Mucosa of descending colon (tissue), 3 donors: ENCODE measurements at regions of chr19 and their contacts with region 1.

Region 1: DNA sequence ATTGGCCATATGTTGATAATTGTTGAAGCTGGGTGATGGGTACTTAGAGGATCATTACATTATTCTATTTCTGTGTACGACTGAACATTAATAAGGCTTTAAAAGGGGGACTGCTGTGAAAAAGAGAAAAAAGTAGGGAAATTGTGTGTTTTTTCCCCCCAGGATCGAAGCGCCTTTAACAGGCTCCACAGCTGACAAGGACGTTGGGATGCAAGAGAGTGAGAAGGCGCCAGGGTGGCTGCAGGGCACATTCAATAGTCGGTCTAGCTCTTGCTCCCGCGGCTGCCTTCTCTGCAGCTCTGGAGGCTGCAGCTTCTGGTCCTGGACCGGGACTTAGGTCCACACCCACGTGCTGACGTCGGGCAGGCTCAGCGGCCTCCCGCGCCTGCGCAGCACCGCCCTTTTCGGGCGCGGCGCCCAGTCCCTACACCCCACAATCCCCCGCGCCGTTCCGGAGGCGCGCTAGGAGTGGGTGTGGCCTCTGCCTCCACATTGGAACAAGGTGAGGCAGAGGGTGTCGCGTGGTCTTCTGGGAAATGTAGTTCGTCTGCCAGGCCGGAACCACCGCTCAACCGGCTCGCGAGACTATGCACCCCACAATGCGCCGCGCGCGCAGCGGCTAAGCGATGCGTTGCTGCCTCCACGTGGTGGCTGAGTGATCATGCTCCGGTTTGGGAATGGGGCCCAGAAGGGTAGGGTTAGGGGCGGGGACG is 4.9 kb upstream of the LRFN3 start:
- DNase-seq: peak; percentile 99 to 100 (median 99)
- ATAC-seq: peak; percentile 98
- H3K4me3 ChIP-seq: no peak overlapping the region
- H3K4me1 ChIP-seq: peaks cover 17% of the 10 kb centered on the region
- CTCF ChIP-seq: peak; percentile 71

Region 2: GRCh38 chr19:35693830-35694599 is 237.3 kb before region 1 on chr19:
- intact Hi-C with region 1: loop called in 1 of 2 experiments (anchors 10 kb)
- DNase-seq: peak; percentile 86 to 95 (median 89)
- ATAC-seq: peak; percentile 100
- H3K4me3 ChIP-seq: no peak overlapping the region
- H3K4me1 ChIP-seq: no peaks in the 10 kb centered on the region
- CTCF ChIP-seq: peak; percentile 88

Region 3: DNA sequence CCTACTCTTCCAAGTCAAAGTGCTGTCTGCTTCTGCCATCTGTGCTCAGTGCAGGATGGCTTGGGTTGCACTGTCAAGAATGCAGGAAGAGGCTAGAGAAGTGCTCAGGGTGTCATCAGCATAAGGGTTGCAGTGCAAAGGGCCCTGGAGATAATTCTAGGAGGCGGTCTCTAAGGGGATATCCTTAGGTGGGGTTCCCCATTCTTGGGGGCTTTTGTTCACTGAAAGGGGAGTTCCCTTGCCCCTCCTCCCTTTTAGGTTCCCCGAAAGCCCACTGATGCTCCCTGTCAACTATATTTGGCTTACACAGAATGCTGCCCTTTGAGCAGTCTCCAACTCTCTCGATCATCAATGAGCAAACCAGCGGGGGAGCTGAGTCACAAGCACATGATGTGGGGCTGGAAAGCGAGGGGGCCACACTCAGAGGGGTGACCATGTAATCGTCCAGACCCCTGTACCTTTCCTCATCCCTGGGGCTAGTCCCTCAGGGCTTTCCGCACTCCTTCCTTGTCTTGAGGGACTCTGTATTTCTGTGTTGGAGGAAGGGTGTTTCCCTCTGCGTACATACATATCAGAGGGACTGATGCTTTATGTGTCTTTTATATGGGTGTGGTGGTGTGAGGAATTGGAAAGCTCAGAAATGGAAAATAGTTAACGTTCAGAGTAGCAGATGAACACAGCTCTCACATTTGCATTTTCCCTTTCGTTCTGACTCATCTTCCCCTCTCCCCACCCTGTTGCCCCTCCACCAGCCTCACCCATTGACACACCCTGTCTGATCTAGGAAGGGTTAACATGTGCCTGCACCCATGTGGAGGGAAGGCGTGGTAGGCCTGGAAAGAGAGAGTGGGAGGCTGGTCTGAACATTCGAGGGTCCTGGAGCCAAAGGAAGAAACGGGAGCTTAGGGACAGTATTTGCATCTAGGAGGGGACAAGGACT is 220.3 kb before region 1 on chr19:
- intact Hi-C with region 1: no loop called
- DNase-seq: no peak
- ATAC-seq: peak; percentile 16
- H3K4me3 ChIP-seq: no peak overlapping the region
- H3K4me1 ChIP-seq: peaks cover 9% of the 10 kb centered on the region
- CTCF ChIP-seq: no peak

Region 4: GRCh38 chr19:35879770-35880317 is 51.5 kb before region 1 on chr19:
- intact Hi-C with region 1: loop called (anchors 5 to 10 kb)
- DNase-seq: peak; percentile 89 to 96 (median 92)
- ATAC-seq: peak; percentile 98
- H3K4me3 ChIP-seq: no peak overlapping the region
- H3K4me1 ChIP-seq: no peaks in the 10 kb centered on the region
- CTCF ChIP-seq: no peak

Region 5: DNA sequence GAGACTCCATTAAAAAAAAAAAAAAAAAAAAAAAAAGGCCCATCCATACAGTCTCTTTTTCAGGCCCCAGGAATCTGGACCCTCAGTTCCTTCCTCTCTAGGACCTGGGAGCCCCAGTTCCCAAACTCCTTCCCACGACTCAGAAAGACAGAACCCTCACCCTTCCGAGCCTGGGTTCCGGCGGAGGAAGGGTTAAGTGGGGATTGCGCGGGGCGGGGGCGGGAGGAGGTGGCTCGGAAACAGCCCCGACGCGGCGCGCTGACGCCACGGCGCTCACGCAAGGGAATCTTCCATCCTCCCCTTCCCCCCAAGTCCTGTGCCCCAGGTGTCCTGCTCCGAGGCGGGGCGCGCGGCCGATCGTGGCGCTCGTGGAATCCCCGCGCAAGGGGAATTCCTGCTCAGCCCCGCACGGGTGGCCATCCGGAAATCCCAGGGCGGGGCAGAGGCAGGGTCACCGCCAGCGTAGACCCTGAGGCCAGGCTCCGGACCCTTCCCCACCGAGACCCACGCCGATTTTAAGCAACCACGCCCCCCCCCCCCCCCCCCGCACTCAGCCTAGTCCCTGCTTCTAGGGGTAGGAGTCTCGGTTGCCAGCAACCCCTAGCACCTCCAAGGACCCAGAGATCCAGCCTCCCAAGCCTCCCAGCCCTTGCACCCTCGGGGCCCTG is 31.6 kb before region 1 on chr19:
- intact Hi-C with region 1: loop called in 1 of 2 experiments (anchors 5 kb)
- DNase-seq: peak; percentile 88 to 93 (median 91)
- ATAC-seq: peak; percentile 89
- H3K4me3 ChIP-seq: peak overlapping the region; percentile 44
- H3K4me1 ChIP-seq: peaks cover 9% of the 10 kb centered on the region
- CTCF ChIP-seq: no peak

Region 6: DNA sequence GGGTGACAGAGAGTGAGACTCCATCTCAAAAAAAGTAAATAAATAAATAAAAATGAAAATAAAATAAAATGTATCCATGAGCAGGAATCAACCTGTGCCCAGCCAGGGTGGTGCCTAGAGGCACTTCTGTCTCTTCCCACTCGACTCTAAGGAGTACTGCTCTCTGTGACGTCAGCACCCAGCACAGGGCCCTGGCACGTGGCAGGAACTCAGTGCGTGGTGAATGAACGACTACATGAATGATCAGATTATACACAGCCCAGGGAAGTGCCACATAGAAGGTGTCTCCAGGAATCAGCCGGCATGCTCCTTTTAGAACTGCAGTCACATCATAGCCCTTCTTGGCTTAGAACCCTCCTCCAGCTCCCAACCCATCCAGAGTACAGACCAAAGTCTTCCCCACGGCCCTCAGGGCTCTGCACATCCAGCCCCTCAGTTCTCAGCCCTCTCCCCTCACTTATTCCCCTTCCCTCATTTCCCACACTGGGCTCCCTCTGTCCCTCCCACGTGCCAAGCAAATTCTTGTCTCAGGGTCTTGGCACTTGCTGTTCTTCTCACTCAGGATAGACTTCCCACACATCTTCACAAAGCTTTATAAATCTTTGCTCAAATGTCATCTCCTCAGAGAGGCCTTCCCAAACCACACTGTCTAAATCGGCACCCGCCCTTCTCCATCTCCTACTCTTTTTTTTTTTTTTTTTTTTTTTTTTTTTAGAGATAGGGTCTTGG is 97.2 kb after region 1 on chr19:
- intact Hi-C with region 1: no loop called
- DNase-seq: no peak
- ATAC-seq: no peak
- H3K4me3 ChIP-seq: no peak overlapping the region
- H3K4me1 ChIP-seq: no peaks in the 10 kb centered on the region
- CTCF ChIP-seq: no peak